ENCODE measurements at regions of chr2 and their contacts with region 1.

Region 1: GRCh38 chr2:127479219-127479825 is 47.0 kb downstream of the IWS1 start:
- DNase-seq: peak in 1 of 42 donors; percentile 16

Region 2: GRCh38 chr2:127324635-127325034 is 154.7 kb before region 1 on chr2:
- intact Hi-C with region 1: loop called (anchors 10 kb)
- DNase-seq: peak in 16 of 42 donors; percentile 6 to 64 (median 32)